Dorsolateral prefrontal cortex (tissue), 120 donors: ENCODE measurements at regions of chr21 and their contacts with region 1.

Region 1: GRCh38 chr21:31198575-31198974 is 145.5 kb downstream of the TIAM1 start:
- DNase-seq: no peak
- H3K4me3 ChIP-seq: no peak overlapping the region
- H3K27ac ChIP-seq: peak overlapping the region in 1 of 59 donors; percentile 38
- H3K27me3 ChIP-seq: no peaks in the 10 kb centered on the region
- CTCF ChIP-seq: peak; percentile 62 to 95 (median 80)

Region 2: DNA sequence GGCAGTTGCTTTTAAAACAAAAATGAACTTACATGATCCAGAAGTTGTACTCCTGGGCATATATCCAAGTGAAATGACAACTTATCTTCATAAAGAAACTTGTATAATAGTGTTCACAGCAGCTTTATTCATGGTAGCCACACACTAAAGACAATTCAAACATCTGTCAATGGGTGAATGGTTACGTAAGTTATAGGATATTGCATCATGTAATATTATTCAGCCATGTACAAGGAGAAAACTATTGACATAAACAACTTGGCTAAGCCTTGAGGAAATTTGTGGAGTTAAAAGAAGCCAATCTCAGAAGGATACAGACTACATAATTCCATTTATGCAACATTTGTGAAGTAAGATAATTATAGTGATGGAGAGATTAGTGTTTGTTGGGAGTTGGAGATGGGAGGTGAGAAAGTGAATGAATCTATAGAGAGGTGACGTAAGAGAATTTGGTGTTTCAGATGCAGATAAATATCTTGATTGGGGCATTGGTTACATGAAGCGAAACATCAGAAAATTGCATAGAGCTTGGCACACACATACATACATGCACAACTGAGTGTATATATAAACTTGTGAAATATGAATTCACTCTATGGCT is 1208.8 kb before region 1 on chr21:
- intact Hi-C with region 1: no loop called
- DNase-seq: no peak
- H3K4me3 ChIP-seq: no peak overlapping the region
- H3K27ac ChIP-seq: no peak overlapping the region
- H3K27me3 ChIP-seq: peaks cover 0 to 4% (median 0%) of the 10 kb centered on the region in 45 donors
- CTCF ChIP-seq: no peak

Region 3: GRCh38 chr21:30990514-30991262 is 207.9 kb before region 1 on chr21:
- intact Hi-C with region 1: no loop called
- DNase-seq: no peak
- H3K4me3 ChIP-seq: no peak overlapping the region
- H3K27ac ChIP-seq: no peak overlapping the region
- H3K27me3 ChIP-seq: no peaks in the 10 kb centered on the region
- CTCF ChIP-seq: no peak

Region 4: GRCh38 chr21:31248601-31249000 is 50.0 kb after region 1 on chr21:
- intact Hi-C with region 1: no loop called
- DNase-seq: no peak
- H3K4me3 ChIP-seq: no peak overlapping the region
- H3K27ac ChIP-seq: peak overlapping the region in 1 of 59 donors; percentile 15
- H3K27me3 ChIP-seq: peaks cover 0 to 4% (median 0%) of the 10 kb centered on the region in 45 donors
- CTCF ChIP-seq: no peak

Region 5: DNA sequence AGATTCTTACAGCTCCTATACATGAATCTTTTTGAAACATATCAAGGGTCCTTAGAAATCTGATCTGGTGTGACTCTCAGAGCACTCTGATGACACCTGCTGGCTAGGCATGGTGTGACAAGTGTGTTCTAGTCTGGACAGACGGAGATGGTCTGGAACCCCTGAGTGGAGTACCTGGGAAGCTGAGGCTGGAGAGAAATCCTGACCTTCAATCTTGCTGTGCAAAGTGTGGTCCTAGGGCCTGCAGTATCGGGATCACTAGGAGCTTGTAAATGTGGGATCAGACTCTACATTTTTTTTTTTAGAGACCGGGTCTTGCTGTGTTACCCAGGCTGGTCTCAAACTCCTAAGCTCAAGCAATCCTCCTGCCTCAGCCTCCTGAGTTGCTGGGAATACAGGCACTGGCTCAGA is 382.3 kb after region 1 on chr21:
- intact Hi-C with region 1: loop called (anchors 2 kb)
- DNase-seq: peak; percentile 57 to 86 (median 66)
- H3K4me3 ChIP-seq: no peak overlapping the region
- H3K27ac ChIP-seq: no peak overlapping the region
- H3K27me3 ChIP-seq: no peaks in the 10 kb centered on the region
- CTCF ChIP-seq: peak; percentile 59 to 94 (median 85)

Region 6: DNA sequence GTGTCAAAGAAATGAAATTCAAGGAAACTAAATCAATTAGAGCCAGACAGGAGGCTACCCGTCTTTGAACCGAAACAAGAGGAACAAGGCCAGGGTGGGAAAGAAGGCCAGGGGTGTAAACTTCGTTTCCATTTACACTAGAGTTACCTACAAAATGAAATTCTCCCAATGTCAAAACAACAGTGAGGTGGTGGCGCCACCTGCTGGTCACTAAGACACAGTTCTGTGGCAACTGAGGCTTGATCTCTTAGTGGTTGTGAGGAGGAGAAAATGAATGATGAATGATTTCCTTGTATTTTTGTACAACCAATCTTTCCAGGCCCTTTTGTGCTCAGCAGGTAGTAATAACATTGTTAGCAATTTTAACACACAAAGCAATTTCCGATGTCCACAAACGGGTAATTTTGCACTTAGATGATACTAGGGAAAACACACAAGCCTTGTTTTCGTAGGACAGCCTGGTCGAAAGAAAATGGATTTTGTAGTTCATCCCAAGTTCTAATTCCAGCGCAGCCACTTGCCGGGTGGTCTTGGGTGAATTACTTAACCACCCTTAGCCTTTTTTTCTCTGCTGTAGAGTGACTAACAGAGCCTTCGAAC is 406.1 kb after region 1 on chr21:
- intact Hi-C with region 1: loop called in 1 of 2 experiments (anchors 1 kb)
- DNase-seq: peak; percentile 60 to 81 (median 70)
- H3K4me3 ChIP-seq: no peak overlapping the region
- H3K27ac ChIP-seq: no peak overlapping the region
- H3K27me3 ChIP-seq: peaks cover 0 to 3% (median 0%) of the 10 kb centered on the region in 45 donors
- CTCF ChIP-seq: peak; percentile 87 to 100 (median 95)